ENCODE measurements at regions of chr22 and their contacts with region 1.

Region 1: GRCh38 chr22:32775957-32776356 is 25.5 kb upstream of the TIMP3 start:
- DNase-seq: peak; percentile 68
- ATAC-seq: peak; percentile 61
- H3K4me3 ChIP-seq: no peak overlapping the region
- H3K27ac ChIP-seq: no peak overlapping the region
- H3K4me1 ChIP-seq: peaks cover 54% of the 10 kb centered on the region
- H3K27me3 ChIP-seq: no peaks in the 10 kb centered on the region
- CTCF ChIP-seq: peak; percentile 71
- EP300 ChIP-seq: no peak
- POLR2A ChIP-seq: no peak
- RAD21 ChIP-seq: peak; percentile 88

Region 2: DNA sequence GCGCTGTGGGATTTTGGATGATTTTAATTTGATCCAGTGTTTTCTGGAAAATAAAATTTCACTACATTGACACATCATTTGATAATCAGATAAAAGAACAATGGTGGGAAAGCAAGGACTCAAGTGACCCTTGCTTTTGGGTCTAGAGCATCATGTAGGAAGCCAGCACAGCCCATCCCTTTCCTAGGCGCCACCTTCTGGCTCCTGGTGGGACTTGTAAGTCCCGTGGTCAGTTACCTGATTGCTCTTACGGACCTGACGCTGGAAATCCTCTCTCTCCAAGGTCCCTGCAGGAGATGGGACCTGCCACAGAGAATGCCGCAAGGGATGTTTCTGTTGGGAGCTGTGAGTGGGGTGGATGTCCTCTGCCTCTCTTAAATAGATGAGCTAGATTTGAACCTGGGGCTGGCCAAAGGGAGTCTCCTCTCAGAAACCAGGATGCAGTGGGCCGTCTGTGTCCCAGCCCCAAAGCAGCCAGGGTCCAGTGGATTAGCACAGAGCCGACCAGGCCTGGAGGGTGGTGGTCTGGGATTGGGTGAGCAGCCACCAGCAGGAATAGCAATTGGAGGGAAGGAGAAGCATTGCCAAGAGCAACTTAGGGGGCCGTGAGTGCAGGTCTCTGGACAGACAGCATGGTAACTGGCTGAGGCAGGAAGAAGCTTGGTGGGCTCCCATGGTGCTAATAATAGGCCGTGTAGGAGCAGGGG is 47.2 kb after region 1 on chr22:
- CTCF ChIA-PET with region 1: interaction called, 6 read pairs
- POLR2A ChIA-PET with region 1: no interaction called
- in situ Hi-C with region 1: no loop called
- intact Hi-C with region 1: loop called (anchors 1 kb)
- DNase-seq: peak; percentile 62
- ATAC-seq: peak; percentile 78
- H3K4me3 ChIP-seq: no peak overlapping the region
- H3K27ac ChIP-seq: no peak overlapping the region
- H3K4me1 ChIP-seq: no peaks in the 10 kb centered on the region
- H3K27me3 ChIP-seq: no peaks in the 10 kb centered on the region
- CTCF ChIP-seq: peak; percentile 74
- EP300 ChIP-seq: no peak
- POLR2A ChIP-seq: no peak
- RAD21 ChIP-seq: 0 out of 2 replicates have a peak, but pooled peaks have one; percentile 52

Region 3: DNA sequence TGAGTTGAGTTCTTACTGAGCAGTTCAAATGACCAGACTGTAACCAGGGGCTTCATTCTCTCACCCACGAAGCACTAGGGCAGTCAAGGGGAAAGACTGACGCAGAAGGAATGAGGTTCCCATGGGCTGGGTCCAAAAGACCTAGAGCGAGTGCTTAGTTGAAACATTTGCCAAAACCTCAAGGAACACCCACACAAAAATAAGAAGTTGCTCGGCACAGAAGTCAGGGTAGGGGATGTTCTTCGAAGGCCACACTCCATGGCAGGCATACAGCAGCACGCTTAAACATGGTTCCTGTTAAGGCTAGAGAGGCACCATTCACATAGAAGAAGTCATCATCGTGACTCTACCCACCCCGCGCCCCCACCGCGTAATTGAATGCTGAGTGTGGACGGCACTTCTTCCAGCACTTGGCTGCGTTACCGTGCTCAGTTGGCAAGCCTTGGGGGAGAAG is 78.4 kb after region 1 on chr22:
- CTCF ChIA-PET with region 1: no interaction called
- POLR2A ChIA-PET with region 1: no interaction called
- in situ Hi-C with region 1: no loop called
- intact Hi-C with region 1: no loop called
- DNase-seq: no peak
- ATAC-seq: no peak
- H3K4me3 ChIP-seq: no peak overlapping the region
- H3K27ac ChIP-seq: no peak overlapping the region
- H3K4me1 ChIP-seq: no peaks in the 10 kb centered on the region
- H3K27me3 ChIP-seq: no peaks in the 10 kb centered on the region
- CTCF ChIP-seq: no peak
- EP300 ChIP-seq: no peak
- POLR2A ChIP-seq: no peak
- RAD21 ChIP-seq: no peak